Posterior vena cava (tissue), 2 donors: ENCODE measurements at regions of chr2 and their contacts with region 1.

Region 1: DNA sequence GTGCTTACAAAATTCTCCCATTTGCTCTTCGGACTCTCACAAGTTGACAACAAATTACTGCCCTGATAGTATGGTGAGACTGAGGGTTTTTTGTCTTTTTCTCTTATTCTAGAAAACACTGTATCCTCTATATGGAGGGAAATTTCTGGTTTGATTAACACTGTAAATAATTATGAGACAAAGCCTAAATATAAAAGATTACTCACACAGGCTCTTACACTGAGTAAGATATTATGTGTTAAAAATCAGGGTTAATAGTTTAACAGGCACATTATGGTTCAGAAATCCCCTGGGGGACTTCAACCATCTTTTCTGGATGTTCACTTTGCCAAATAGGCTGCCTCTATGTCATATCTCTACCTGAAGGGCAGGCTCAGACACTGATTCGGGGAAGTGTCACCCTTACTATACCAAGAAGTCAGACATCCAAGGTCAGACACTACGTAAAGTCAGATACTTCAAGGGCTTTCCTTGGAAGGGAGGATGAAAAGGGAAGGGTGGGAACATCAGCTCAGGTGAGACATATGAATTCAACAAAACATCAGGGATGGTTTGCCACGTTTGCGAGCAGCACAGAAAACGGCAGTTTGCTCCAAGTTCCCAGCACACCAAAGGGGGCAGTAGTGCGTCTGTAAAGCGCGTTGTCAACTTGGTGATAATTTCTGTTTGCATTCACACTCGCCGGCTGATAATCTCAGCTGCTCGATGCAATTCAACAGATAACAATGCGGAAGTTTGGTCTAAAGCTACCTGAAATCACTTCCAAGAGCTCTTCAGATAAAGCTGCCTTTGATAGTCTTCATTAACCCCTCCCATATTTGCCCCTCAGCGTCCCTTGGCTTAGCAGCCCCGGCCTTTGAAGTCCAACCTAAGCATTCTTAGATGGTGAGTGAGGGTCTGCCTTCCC is 972 bp upstream of the RASGRP3 start:
- DNase-seq: peak; percentile 87

Region 2: GRCh38 chr2:33510586-33510968 is 35.1 kb after region 1 on chr2:
- intact Hi-C with region 1: no loop called
- DNase-seq: no peak

Region 3: GRCh38 chr2:33583194-33583938 is 107.9 kb after region 1 on chr2:
- intact Hi-C with region 1: loop called (anchors 10 kb)
- DNase-seq: no peak